A673 (cell line): ENCODE measurements at regions of chr1 and their contacts with region 1.

Region 1: GRCh38 chr1:37995751-37996345 is 6.0 kb upstream of the SF3A3 start:
- DNase-seq: peak; percentile 97
- H3K4me3 ChIP-seq: peak overlapping the region; percentile 54
- H3K27ac ChIP-seq: peak overlapping the region; percentile 99
- H3K4me1 ChIP-seq: peaks cover 52% of the 10 kb centered on the region
- H3K27me3 ChIP-seq: no peaks in the 10 kb centered on the region
- CTCF ChIP-seq: no peak

Region 2: GRCh38 chr1:37602750-37603694 is 392.8 kb before region 1 on chr1:
- CTCF ChIA-PET with region 1: interaction called, 11 read pairs
- POLR2A ChIA-PET with region 1: no interaction called
- intact Hi-C with region 1: no loop called
- DNase-seq: peak; percentile 63
- H3K4me3 ChIP-seq: no peak overlapping the region
- H3K27ac ChIP-seq: no peak overlapping the region
- H3K4me1 ChIP-seq: no peaks in the 10 kb centered on the region
- H3K27me3 ChIP-seq: peaks cover 26% of the 10 kb centered on the region
- CTCF ChIP-seq: peak; percentile 83